Cardiac septum (tissue), 1 donor: ENCODE measurements at regions of chr5 and their contacts with region 1.

Region 1: DNA sequence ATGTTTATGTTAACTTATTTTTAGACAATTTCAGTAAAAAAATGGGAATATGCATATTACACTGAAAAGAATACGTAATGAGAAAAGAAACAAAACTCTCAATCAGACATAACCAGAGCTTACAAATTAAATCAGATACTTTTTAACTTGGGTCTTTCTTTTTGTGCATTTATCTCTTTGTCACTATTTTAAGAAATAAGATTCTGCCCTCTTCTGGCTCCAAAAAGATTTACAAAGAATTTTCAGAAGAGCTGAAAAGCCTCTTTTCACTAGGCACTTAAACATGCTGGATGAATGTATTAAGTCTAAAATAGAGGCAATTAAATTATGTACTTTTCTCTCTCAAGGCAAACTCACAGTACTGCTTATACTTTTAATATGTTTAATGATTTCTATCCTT is 55.5 kb downstream of the CEP120 start:
- DNase-seq: no peak

Region 2: DNA sequence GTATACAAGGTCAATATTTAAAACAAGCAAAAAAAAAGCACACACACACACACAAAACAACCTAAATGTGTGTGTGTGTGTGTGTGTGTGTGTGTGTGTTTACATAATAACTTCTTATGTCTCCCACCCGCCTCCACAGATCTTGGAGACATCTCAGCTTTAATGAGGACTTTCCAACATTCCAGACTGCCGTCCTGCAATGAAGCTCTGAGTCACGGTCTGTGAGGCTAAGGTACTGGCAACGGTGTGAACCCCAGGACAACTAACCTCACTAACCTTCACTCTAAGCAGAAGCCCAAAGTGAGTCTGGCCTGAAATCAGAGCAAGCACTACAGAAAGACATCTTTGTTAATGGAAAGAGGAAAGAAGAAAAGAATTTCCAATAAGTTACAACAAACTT is 1216.1 kb before region 1 on chr5:
- intact Hi-C with region 1: no loop called
- DNase-seq: no peak

Region 3: GRCh38 chr5:122500245-122501075 is 867.3 kb before region 1 on chr5:
- intact Hi-C with region 1: loop called (anchors 10 kb)
- DNase-seq: no peak

Region 4: GRCh38 chr5:123303802-123304201 is 63.9 kb before region 1 on chr5:
- intact Hi-C with region 1: no loop called
- DNase-seq: no peak

Region 5: DNA sequence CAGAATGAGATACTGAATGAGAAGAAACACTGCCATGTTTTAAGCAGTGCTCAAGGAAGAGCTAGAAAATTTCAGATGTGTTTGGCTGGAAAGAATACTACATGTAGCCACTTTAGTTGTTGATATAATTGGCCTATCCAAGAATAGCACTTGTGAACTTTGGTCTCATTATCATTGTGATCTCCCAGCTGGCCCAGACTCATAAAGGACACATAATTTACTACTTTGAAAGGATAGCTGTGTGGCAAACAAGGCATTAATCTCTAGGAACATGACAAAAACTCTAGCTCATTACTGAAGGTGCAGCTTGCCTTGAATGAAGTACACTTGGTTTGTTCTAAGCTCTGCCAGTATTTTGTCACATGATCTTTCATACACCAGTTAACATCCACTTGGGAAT is 500.5 kb after region 1 on chr5:
- intact Hi-C with region 1: no loop called
- DNase-seq: no peak